A673 (cell line): ENCODE measurements at regions of chr9 and their contacts with region 1.

Region 1: GRCh38 chr9:73011181-73011750 is 58.4 kb upstream of the ALDH1A1 start:
- DNase-seq: no peak
- H3K4me3 ChIP-seq: no peak overlapping the region
- H3K27ac ChIP-seq: no peak overlapping the region
- H3K4me1 ChIP-seq: no peaks in the 10 kb centered on the region
- H3K27me3 ChIP-seq: no peaks in the 10 kb centered on the region
- CTCF ChIP-seq: no peak

Region 2: GRCh38 chr9:72960446-72960845 is 50.8 kb before region 1 on chr9:
- CTCF ChIA-PET with region 1: no interaction called
- POLR2A ChIA-PET with region 1: no interaction called
- intact Hi-C with region 1: loop called (anchors 10 kb)
- DNase-seq: no peak
- H3K4me3 ChIP-seq: no peak overlapping the region
- H3K27ac ChIP-seq: no peak overlapping the region
- H3K4me1 ChIP-seq: no peaks in the 10 kb centered on the region
- H3K27me3 ChIP-seq: no peaks in the 10 kb centered on the region
- CTCF ChIP-seq: no peak